Mammary epithelial cell (primary cell): ENCODE measurements at regions of chr13 and their contacts with region 1.

Region 1: GRCh38 chr13:97798836-97799235 is 154.6 kb upstream of the IPO5 start:
- DNase-seq: no peak
- H3K4me3 ChIP-seq: no peak overlapping the region
- H3K27ac ChIP-seq: no peak overlapping the region
- H3K4me1 ChIP-seq: no peaks in the 10 kb centered on the region
- H3K27me3 ChIP-seq: no peaks in the 10 kb centered on the region
- CTCF ChIP-seq: no peak

Region 2: GRCh38 chr13:97018029-97018831 is 780.6 kb before region 1 on chr13:
- CTCF ChIA-PET with region 1: no interaction called
- dilution Hi-C with region 1: no loop called
- in situ Hi-C with region 1: no loop called
- intact Hi-C with region 1: loop called (anchors 5 kb)
- DNase-seq: peak; percentile 39
- H3K4me3 ChIP-seq: no peak overlapping the region
- H3K27ac ChIP-seq: no peak overlapping the region
- H3K4me1 ChIP-seq: no peaks in the 10 kb centered on the region
- H3K27me3 ChIP-seq: peaks cover 3% of the 10 kb centered on the region
- CTCF ChIP-seq: peak; percentile 89 to 96

Region 3: DNA sequence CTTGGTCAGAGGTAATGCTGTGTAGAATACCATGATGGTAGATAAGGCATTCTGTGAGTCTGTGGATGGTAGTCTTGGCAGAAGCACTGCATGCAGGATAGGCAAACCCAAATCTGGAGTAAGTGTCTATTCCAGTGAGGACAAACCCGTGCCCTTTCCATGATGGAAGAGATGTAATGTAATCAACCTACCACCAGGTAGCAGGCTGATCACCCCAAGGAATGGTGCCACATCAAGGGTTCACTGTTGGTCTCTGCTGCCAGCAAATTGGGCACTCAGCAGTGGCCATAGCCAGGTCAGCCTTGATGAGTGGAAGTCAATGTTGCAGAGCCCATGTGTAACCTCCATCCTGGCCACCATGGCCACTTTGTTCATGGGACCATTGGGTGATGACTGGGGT is 209.8 kb before region 1 on chr13:
- CTCF ChIA-PET with region 1: no interaction called
- dilution Hi-C with region 1: no loop called
- in situ Hi-C with region 1: no loop called
- intact Hi-C with region 1: loop called (anchors 1 kb)
- DNase-seq: no peak
- H3K4me3 ChIP-seq: no peak overlapping the region
- H3K27ac ChIP-seq: no peak overlapping the region
- H3K4me1 ChIP-seq: no peaks in the 10 kb centered on the region
- H3K27me3 ChIP-seq: no peaks in the 10 kb centered on the region
- CTCF ChIP-seq: no peak

Region 4: GRCh38 chr13:97749174-97749573 is 49.7 kb before region 1 on chr13:
- CTCF ChIA-PET with region 1: no interaction called
- dilution Hi-C with region 1: no loop called
- in situ Hi-C with region 1: no loop called
- intact Hi-C with region 1: loop called (anchors 1 kb)
- DNase-seq: peak; percentile 89
- H3K4me3 ChIP-seq: no peak overlapping the region
- H3K27ac ChIP-seq: no peak overlapping the region
- H3K4me1 ChIP-seq: no peaks in the 10 kb centered on the region
- H3K27me3 ChIP-seq: no peaks in the 10 kb centered on the region
- CTCF ChIP-seq: peak; percentile 18 to 49

Region 5: GRCh38 chr13:97946951-97947588 is 148.2 kb after region 1 on chr13:
- CTCF ChIA-PET with region 1: no interaction called
- dilution Hi-C with region 1: no loop called
- in situ Hi-C with region 1: no loop called
- intact Hi-C with region 1: no loop called
- DNase-seq: peak; percentile 71
- H3K4me3 ChIP-seq: no peak overlapping the region
- H3K27ac ChIP-seq: peak overlapping the region; percentile 60
- H3K4me1 ChIP-seq: peaks cover 16% of the 10 kb centered on the region
- H3K27me3 ChIP-seq: no peaks in the 10 kb centered on the region
- CTCF ChIP-seq: no peak